ENCODE measurements at regions of chr9 and their contacts with region 1.

Region 1: GRCh38 chr9:93095205-93096130 is 549 bp upstream of the CARD19 start:
- DNase-seq: peak; percentile 99 to 100 (median 99)
- H3K4me3 ChIP-seq: peak overlapping the region; percentile 48 to 100 (median 95)
- H3K27ac ChIP-seq: peak overlapping the region; percentile 36 to 97 (median 93)
- H3K27me3 ChIP-seq: no peaks in the 10 kb centered on the region
- CTCF ChIP-seq: peak in 4 of 56 donors; percentile 3 to 28 (median 12)

Region 2: DNA sequence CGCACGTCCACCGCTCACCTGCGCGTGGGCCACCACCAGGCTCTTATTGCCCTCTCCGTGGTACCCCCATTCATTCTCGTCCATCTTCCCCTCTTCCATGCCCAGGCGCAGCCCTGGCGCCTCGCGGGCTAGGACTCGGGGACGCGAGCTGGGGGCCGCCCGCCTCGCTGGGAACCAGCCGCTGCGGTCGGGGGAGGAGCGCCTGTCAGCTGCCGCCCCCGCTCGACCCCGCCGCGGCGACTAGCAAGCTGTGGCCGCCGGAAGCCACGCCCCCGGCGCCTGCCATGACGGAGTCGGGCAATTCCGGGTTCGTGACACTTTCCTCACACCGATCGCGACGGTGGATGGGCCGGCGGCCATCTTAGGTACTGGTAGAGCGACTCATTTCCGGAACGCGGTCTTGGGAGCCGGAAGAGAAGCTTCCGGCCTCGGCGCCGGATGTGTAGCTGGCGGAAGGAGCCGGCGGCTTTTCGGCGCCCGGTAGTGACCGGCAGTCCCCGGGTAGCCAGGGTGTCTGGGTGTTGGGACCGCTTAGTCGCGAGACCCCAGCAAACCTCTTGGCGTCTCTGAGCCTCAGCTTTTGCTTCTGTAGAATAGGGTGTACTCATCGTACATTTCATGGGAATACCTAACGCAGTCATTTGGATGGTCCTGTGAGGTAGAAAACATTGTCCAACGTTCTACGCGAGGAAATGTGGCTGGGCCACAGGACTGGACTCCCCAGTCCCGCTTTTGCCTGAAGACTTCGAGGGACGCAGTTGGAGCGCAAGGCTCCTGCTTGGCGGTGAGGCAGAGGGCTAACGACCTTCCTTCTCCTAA is 425.4 kb before region 1 on chr9 and contains the start of gene IPPK:
- intact Hi-C with region 1: loop called in 1 of 2 experiments (anchors 10 kb)
- DNase-seq: peak; percentile 95 to 99 (median 98)
- H3K4me3 ChIP-seq: peak within 1 kb of the TSS; percentile 68 to 100 (median 94)
- H3K27ac ChIP-seq: peak within 1 kb of the TSS; percentile 36 to 94 (median 86)
- H3K27me3 ChIP-seq: no peaks in the 10 kb centered on the region
- CTCF ChIP-seq: peak in 39 of 56 donors; percentile 12 to 58 (median 32)
- total RNA-seq, gene IPPK: 10.7 to 26.7 (median 16.0) TPM

Region 3: DNA sequence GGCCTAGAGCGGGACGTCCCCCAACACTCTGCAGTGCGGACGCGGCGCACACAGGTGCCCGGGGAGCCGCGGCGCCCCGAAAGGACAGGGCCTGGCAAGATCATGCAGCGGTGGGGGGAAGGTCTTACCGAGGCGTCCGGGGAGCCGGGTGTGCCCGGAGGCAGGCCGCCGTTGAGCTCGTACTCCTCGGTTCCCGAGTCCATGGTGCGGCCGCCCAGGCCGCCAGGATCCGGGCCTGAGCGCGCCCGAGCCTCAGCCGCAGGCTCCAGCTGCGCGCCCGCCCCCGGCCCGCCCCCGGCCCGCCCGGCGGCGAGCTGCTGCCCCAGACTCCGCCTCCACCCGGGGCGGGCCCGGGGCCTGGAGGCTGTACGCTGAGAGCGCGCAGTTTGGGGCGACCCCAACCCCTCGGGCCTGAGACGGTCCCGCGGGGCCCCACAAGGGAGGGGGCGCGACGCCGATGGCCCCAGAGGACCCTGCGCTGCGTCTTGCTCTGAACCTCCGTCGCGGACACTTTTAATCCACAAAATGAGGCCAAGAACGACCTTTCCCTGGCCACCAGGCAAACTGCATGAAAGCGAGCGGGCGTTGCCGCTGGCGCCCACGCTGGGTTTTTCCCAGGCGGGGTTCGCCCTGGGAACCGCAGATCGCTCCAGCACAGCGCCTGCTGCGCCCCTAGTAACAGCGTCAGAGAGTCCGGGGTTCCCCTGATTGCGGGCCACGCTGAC is 38.7 kb after region 1 on chr9 and contains the start of gene NINJ1:
- intact Hi-C with region 1: loop called in 1 of 2 experiments (anchors 5 kb)
- DNase-seq: peak in 3 of 10 donors; percentile 59 to 84 (median 74)
- H3K4me3 ChIP-seq: peak within 1 kb of the TSS; percentile 65 to 98 (median 85)
- H3K27ac ChIP-seq: peak within 1 kb of the TSS; percentile 49 to 96 (median 86)
- H3K27me3 ChIP-seq: no peaks in the 10 kb centered on the region
- CTCF ChIP-seq: peak in 2 of 56 donors; percentile 3 to 9
- total RNA-seq, gene NINJ1: 22.7 to 61.9 (median 33.5) TPM

Region 4: GRCh38 chr9:93143830-93144530 is 48.5 kb after region 1 on chr9:
- intact Hi-C with region 1: loop called in 1 of 2 experiments (anchors 2 kb)
- DNase-seq: peak; percentile 69 to 95 (median 86)
- H3K4me3 ChIP-seq: peak overlapping the region in 5 of 59 donors; percentile 3 to 29 (median 14)
- H3K27ac ChIP-seq: peak overlapping the region in 51 of 59 donors; percentile 7 to 91 (median 72)
- H3K27me3 ChIP-seq: no peaks in the 10 kb centered on the region
- CTCF ChIP-seq: peak in 13 of 56 donors; percentile 7 to 39 (median 18)

Region 5: DNA sequence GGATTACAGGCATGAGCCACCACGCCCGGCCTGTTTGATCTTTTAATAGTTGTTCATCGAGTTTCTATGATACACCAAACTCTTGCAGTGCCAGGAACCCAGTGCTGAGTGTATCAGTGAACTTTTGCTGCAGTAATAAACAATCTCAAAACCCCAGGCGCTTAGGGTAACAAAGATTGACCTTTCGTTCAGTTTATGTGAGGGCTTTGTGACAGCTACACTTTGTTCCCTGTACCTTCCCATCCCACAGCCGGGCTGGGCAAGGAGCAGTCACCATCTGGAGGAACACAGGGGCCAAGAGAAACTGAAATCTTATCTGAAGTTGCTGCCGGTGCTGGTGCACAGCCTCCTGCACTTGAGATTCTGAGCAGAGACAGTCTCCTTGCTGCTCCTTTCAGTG is 71.2 kb after region 1 on chr9:
- intact Hi-C with region 1: no loop called
- DNase-seq: no peak
- H3K4me3 ChIP-seq: no peak overlapping the region
- H3K27ac ChIP-seq: no peak overlapping the region
- H3K27me3 ChIP-seq: no peaks in the 10 kb centered on the region
- CTCF ChIP-seq: no peak

Region 6: GRCh38 chr9:93453047-93453914 is 357.8 kb after region 1 on chr9 and contains the start of gene FAM120AOS:
- intact Hi-C with region 1: loop called (anchors 5 to 10 kb)
- DNase-seq: peak; percentile 88 to 99 (median 96)
- H3K4me3 ChIP-seq: peak within 1 kb of the TSS; percentile 64 to 97 (median 86)
- H3K27ac ChIP-seq: peak within 1 kb of the TSS; percentile 65 to 99 (median 94)
- H3K27me3 ChIP-seq: no peaks in the 10 kb centered on the region
- CTCF ChIP-seq: peak in 25 of 56 donors; percentile 9 to 55 (median 25)
- total RNA-seq, gene FAM120AOS: 34.2 to 62.8 (median 46.0) TPM

Region 7: DNA sequence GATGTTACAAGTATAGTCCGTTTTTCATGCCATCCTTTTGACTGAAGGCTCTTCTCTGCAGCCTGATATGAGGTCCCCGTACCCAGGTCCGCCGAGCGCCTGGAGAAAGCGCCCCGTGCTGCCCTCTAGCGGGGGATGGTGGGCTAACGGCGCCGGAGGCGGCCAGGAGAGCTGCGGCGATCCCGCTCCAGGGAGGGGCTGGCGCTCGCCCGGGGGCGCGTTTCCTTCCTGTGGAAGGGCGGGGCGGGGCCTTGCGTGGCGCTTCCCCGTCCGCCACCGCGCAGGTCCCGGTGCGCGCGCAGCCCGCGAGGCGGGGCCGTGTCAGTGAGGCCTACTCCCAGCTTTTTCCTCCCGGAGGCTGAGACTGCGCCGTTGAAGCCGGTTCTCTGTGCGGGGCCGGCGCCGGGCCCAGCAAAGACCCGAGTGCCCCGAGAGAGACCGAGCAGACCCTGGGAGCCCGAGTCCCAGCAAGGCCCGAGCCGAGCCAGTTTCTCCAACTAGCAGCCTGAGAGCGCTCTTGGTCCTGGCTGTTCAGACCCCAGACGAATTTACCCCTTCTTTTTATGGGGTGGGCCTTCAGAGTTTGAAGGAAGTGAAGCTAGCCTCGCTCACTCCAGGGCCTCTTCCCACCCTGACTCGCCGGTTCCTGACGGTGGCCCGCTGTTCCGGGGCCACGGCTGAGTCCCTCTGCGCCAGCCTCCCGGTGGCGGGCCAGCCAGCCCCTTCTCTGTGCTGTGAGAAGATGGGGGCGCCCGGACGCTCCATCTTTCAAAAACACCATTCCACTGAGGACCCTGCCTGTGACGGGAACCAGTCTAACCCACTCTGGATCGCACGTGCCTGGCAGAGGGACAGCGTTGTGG is 471.2 kb after region 1 on chr9:
- intact Hi-C with region 1: loop called (anchors 5 to 10 kb)
- DNase-seq: peak; percentile 96 to 100 (median 98)
- H3K4me3 ChIP-seq: peak overlapping the region; percentile 44 to 89 (median 73)
- H3K27ac ChIP-seq: peak overlapping the region; percentile 75 to 99 (median 95)
- H3K27me3 ChIP-seq: no peaks in the 10 kb centered on the region
- CTCF ChIP-seq: peak; percentile 75 to 100 (median 98)

Measured in dorsolateral prefrontal cortex (tissue), 120 donors.